CD8-positive, alpha-beta T cell (primary cell): ENCODE measurements at regions of chr1 and their contacts with region 1.

Region 1: GRCh38 chr1:209411491-209411929 is 172.0 kb upstream of the CAMK1G start:
- DNase-seq: no peak
- ATAC-seq: no peak
- H3K4me3 ChIP-seq: no peak overlapping the region
- H3K4me3 Mint-ChIP-seq: no peak overlapping the region
- H3K27ac ChIP-seq: no peak overlapping the region
- H3K27ac Mint-ChIP-seq: no peak overlapping the region
- H3K4me1 ChIP-seq: no peaks in the 10 kb centered on the region
- H3K4me1 Mint-ChIP-seq: no peaks in the 10 kb centered on the region
- H3K27me3 ChIP-seq: no peaks in the 10 kb centered on the region
- H3K27me3 Mint-ChIP-seq: peaks cover 25% of the 10 kb centered on the region
- CTCF ChIP-seq: no peak

Region 2: DNA sequence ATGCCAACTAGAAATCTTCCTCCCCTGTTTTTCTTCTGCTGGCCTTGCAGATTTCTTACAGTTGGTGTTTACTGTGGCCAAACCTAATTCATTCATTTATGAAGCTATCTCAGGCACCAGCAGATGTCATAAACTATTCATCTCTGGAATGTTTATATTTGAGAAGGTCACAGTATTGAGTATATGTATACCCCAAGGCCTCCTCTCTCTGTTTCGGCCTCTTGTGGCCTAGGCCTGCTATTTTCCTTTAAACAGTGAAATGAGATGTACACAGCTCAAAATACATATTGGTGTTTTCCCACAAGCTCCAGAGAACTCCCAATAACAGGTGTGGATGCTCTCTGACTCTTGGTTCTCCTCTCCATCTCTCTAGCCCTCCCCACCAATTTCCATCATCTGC is 348.6 kb before region 1 on chr1:
- CTCF ChIA-PET with region 1: no interaction called
- POLR2A ChIA-PET with region 1: no interaction called
- intact Hi-C with region 1: no loop called
- DNase-seq: no peak
- ATAC-seq: no peak
- H3K4me3 ChIP-seq: no peak overlapping the region
- H3K4me3 Mint-ChIP-seq: no peak overlapping the region
- H3K27ac ChIP-seq: no peak overlapping the region
- H3K27ac Mint-ChIP-seq: no peak overlapping the region
- H3K4me1 ChIP-seq: no peaks in the 10 kb centered on the region
- H3K4me1 Mint-ChIP-seq: no peaks in the 10 kb centered on the region
- H3K27me3 ChIP-seq: no peaks in the 10 kb centered on the region
- H3K27me3 Mint-ChIP-seq: peaks cover 4% of the 10 kb centered on the region
- CTCF ChIP-seq: no peak

Region 3: GRCh38 chr1:209354111-209354839 is 57.2 kb before region 1 on chr1:
- CTCF ChIA-PET with region 1: no interaction called
- POLR2A ChIA-PET with region 1: no interaction called
- intact Hi-C with region 1: loop called in 1 of 2 experiments (anchors 10 kb)
- DNase-seq: peak in 7 of 9 experiments; percentile 11 to 54 (median 37)
- ATAC-seq: no peak
- H3K4me3 ChIP-seq: no peak overlapping the region
- H3K4me3 Mint-ChIP-seq: no peak overlapping the region
- H3K27ac ChIP-seq: no peak overlapping the region
- H3K27ac Mint-ChIP-seq: no peak overlapping the region
- H3K4me1 ChIP-seq: no peaks in the 10 kb centered on the region
- H3K4me1 Mint-ChIP-seq: no peaks in the 10 kb centered on the region
- H3K27me3 ChIP-seq: no peaks in the 10 kb centered on the region
- H3K27me3 Mint-ChIP-seq: peaks cover 2% of the 10 kb centered on the region
- CTCF ChIP-seq: peak; percentile 44

Region 4: DNA sequence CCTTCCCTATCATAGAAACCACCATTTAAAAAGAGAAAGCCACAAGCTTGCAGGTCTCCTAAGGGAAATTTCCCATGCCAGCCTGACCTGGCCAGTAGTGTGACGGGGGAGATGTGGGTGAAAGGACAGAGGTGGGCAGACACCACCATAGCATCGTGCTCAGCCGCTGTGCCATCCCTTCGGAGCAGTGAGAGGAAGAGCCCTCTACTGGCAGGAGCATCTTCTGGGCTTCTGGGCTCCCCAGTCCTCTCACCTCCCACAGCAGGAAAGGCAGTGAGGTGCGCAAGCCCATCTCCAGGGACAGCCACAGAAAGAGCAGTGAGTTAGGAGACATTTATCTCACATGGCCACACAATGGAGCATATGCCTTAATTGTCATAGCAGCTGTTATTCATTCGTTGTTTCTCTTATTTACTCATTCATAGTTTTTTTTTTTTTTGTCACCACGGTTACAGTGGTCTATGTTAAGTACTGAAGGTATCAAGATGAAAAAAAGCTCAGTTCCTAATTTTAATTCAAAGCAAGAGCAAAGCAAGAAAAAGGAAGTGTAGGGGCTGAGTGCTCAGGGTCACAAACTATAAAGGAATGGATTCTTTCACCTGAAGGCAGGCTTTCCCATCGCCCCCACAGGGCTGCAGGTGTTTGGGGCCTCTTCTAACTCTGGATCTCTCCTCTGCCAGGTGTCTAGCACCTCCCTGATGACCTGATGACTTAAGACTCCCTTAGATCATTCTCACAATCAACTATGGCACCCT is 123.2 kb after region 1 on chr1:
- CTCF ChIA-PET with region 1: no interaction called
- POLR2A ChIA-PET with region 1: no interaction called
- intact Hi-C with region 1: no loop called
- DNase-seq: no peak
- ATAC-seq: no peak
- H3K4me3 ChIP-seq: no peak overlapping the region
- H3K4me3 Mint-ChIP-seq: no peak overlapping the region
- H3K27ac ChIP-seq: no peak overlapping the region
- H3K27ac Mint-ChIP-seq: no peak overlapping the region
- H3K4me1 ChIP-seq: no peaks in the 10 kb centered on the region
- H3K4me1 Mint-ChIP-seq: no peaks in the 10 kb centered on the region
- H3K27me3 ChIP-seq: no peaks in the 10 kb centered on the region
- H3K27me3 Mint-ChIP-seq: peaks cover 44% of the 10 kb centered on the region
- CTCF ChIP-seq: no peak